Activated naive CD4-positive, alpha-beta T cell treated with anti-CD3 and anti-CD28 coated beads for 36 hours (primary cell): ENCODE measurements at regions of chr4 and their contacts with region 1.

Region 1: DNA sequence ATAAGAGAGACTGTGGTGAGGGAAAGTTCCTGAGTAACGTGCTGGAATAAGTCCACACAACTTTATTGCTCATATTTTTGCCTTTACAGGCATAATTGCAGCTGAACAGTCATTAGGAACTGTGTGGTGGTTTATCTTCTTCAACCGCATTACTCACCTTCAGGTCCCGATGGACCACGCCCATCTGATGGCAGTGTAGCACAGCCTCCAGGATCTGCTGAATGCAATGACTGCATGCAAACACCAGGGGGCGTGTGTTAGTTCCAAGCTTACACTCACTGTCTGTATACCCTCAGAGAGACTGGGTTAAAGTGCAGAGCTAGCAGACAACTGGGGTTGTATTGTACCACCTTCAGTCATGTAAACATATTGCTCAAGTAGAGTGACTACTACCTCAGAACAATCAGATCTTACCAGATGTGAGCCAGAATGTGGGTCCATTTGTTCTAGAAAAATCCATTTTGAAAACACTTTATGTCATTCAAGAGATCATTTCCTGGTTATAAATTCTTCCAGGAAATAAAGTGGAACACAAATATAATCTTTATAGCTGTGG is 214.0 kb downstream of the CAMK2D start:
- DNase-seq: peak; percentile 97
- H3K4me3 Mint-ChIP-seq: no peak overlapping the region
- H3K27ac Mint-ChIP-seq: peak overlapping the region; percentile 8
- H3K4me1 Mint-ChIP-seq: peaks cover 17% of the 10 kb centered on the region
- H3K27me3 Mint-ChIP-seq: no peaks in the 10 kb centered on the region

Region 2: DNA sequence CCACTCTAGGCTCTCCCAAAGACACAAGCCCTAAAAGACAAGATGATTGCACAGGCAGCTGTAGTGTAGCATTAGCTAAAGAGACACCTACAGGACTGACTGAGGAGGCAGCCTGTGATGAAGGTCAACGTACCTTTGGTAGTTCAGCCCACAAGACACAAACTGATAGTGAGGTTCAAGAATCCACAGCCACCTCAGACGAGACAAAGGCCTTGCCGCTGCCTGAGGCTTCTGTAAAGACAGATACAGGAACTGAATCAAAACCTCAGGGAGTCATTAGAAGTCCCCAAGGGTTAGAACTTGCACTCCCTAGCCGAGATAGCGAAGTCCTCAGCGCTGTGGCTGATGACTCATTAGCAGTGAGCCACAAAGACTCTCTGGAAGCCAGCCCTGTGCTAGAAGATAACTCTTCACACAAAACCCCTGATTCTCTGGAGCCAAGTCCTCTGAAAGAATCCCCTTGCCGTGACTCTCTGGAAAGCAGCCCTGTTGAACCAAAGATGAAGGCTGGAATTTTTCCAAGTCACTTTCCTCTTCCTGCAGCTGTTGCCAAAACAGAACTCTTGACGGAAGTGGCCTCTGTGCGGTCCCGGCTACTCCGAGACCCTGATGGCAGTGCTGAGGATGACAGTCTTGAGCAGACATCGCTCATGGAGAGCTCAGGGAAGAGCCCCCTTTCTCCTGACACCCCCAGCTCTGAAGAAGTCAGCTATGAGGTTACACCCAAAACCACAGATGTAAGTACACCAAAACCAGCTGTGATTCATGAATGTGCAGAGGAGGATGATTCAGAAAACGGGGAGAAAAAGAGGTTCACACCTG is 191.8 kb before region 1 on chr4:
- CTCF ChIA-PET with region 1: no interaction called
- intact Hi-C with region 1: loop called (anchors 1 kb)
- DNase-seq: peak; percentile 91
- H3K4me3 Mint-ChIP-seq: peak overlapping the region; percentile 59
- H3K27ac Mint-ChIP-seq: peak overlapping the region; percentile 98
- H3K4me1 Mint-ChIP-seq: peaks cover 39% of the 10 kb centered on the region
- H3K27me3 Mint-ChIP-seq: peaks cover 42% of the 10 kb centered on the region

Region 3: GRCh38 chr4:113419631-113420030 is 127.9 kb before region 1 on chr4:
- CTCF ChIA-PET with region 1: no interaction called
- intact Hi-C with region 1: no loop called
- DNase-seq: no peak
- H3K4me3 Mint-ChIP-seq: no peak overlapping the region
- H3K27ac Mint-ChIP-seq: no peak overlapping the region
- H3K4me1 Mint-ChIP-seq: no peaks in the 10 kb centered on the region
- H3K27me3 Mint-ChIP-seq: peaks cover 4% of the 10 kb centered on the region

Region 4: GRCh38 chr4:113446019-113446418 is 101.5 kb before region 1 on chr4:
- CTCF ChIA-PET with region 1: interaction called, 5 read pairs
- intact Hi-C with region 1: loop called (anchors 1 kb)
- DNase-seq: no peak
- H3K4me3 Mint-ChIP-seq: no peak overlapping the region
- H3K27ac Mint-ChIP-seq: peak overlapping the region; percentile 66
- H3K4me1 Mint-ChIP-seq: peaks cover 27% of the 10 kb centered on the region
- H3K27me3 Mint-ChIP-seq: no peaks in the 10 kb centered on the region

Region 5: GRCh38 chr4:113582737-113583136 is 35.2 kb after region 1 on chr4:
- CTCF ChIA-PET with region 1: interaction called, 11 read pairs
- intact Hi-C with region 1: no loop called
- DNase-seq: no peak
- H3K4me3 Mint-ChIP-seq: no peak overlapping the region
- H3K27ac Mint-ChIP-seq: no peak overlapping the region
- H3K4me1 Mint-ChIP-seq: peaks cover 24% of the 10 kb centered on the region
- H3K27me3 Mint-ChIP-seq: no peaks in the 10 kb centered on the region

Region 6: DNA sequence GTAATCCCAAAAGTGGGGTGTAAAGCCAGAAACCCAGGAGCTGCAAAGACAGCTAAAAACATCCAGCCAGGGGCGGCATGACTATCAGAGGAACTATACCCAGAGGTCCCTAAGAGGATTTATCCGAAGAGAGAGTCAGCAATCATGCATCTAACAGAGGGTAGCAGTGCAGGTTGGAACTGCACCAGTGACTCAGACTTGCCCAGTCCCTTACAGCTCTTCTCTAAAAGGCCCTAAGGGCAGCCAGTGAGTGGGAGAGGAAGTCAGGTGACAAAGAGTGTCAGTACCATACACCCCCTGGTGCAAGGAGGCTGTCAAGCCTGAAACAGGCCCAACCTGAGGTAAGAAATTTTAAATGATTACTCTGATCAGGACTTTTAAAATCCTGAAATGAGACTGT is 125.9 kb after region 1 on chr4:
- CTCF ChIA-PET with region 1: interaction called, 6 read pairs
- intact Hi-C with region 1: loop called (anchors 1 kb)
- DNase-seq: peak; percentile 71
- H3K4me3 Mint-ChIP-seq: no peak overlapping the region
- H3K27ac Mint-ChIP-seq: peak overlapping the region; percentile 71
- H3K4me1 Mint-ChIP-seq: peaks cover 46% of the 10 kb centered on the region
- H3K27me3 Mint-ChIP-seq: no peaks in the 10 kb centered on the region

Region 7: DNA sequence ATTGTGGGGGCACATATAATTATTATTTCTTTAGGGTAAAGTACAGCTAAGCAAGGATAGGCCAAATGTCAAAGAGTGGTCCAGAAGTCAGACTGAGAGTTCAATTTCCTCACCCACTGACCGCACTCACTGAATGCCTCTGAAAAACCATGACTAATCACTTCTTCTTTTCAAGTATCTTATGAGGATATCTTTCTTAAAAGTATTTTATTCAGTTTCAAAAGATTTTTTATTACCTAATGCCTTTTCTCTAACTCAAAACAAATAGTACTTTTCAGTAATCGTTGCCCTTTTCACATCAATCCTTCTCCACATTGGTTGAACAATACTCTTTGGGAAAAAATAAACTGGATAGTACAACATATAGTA is 275.7 kb after region 1 on chr4:
- CTCF ChIA-PET with region 1: interaction called, 3 read pairs
- intact Hi-C with region 1: loop called (anchors 1 kb)
- DNase-seq: no peak
- H3K4me3 Mint-ChIP-seq: no peak overlapping the region
- H3K27ac Mint-ChIP-seq: no peak overlapping the region
- H3K4me1 Mint-ChIP-seq: peaks cover 66% of the 10 kb centered on the region
- H3K27me3 Mint-ChIP-seq: no peaks in the 10 kb centered on the region